Natural killer cell (primary cell): ENCODE measurements at regions of chr3 and their contacts with region 1.

Region 1: GRCh38 chr3:58630076-58630709 is 36.4 kb downstream of the FAM3D start:
- DNase-seq: peak; percentile 40 to 70
- ATAC-seq: peak; percentile 52 to 73 (median 57)
- H3K4me3 ChIP-seq: no peak overlapping the region
- H3K4me3 Mint-ChIP-seq: no peak overlapping the region
- H3K27ac ChIP-seq: no peak overlapping the region
- H3K27ac Mint-ChIP-seq: no peak overlapping the region
- H3K4me1 ChIP-seq: peaks cover 3% of the 10 kb centered on the region
- H3K4me1 Mint-ChIP-seq: peaks cover 5 to 7% of the 10 kb centered on the region in 2 donors
- H3K27me3 ChIP-seq: no peaks in the 10 kb centered on the region
- H3K27me3 Mint-ChIP-seq: peaks cover 8 to 10% of the 10 kb centered on the region in 2 donors
- CTCF ChIP-seq: peak; percentile 85

Region 2: GRCh38 chr3:58299839-58300516 is 330.2 kb before region 1 on chr3:
- intact Hi-C with region 1: loop called (anchors 5 kb)
- DNase-seq: peak in 1 of 2 donors; percentile 36
- ATAC-seq: peak in 1 of 3 donors; percentile 18
- H3K4me3 ChIP-seq: no peak overlapping the region
- H3K4me3 Mint-ChIP-seq: no peak overlapping the region
- H3K27ac ChIP-seq: no peak overlapping the region
- H3K27ac Mint-ChIP-seq: no peak overlapping the region
- H3K4me1 ChIP-seq: no peaks in the 10 kb centered on the region
- H3K4me1 Mint-ChIP-seq: no peaks in the 10 kb centered on the region
- H3K27me3 ChIP-seq: no peaks in the 10 kb centered on the region
- H3K27me3 Mint-ChIP-seq: peaks cover 18 to 19% of the 10 kb centered on the region in 2 donors
- CTCF ChIP-seq: peak; percentile 29

Region 3: GRCh38 chr3:58321791-58322190 is 308.4 kb before region 1 on chr3:
- intact Hi-C with region 1: loop called (anchors 2 kb)
- DNase-seq: no peak
- ATAC-seq: no peak
- H3K4me3 ChIP-seq: no peak overlapping the region
- H3K4me3 Mint-ChIP-seq: no peak overlapping the region
- H3K27ac ChIP-seq: no peak overlapping the region
- H3K27ac Mint-ChIP-seq: no peak overlapping the region
- H3K4me1 ChIP-seq: no peaks in the 10 kb centered on the region
- H3K4me1 Mint-ChIP-seq: no peaks in the 10 kb centered on the region
- H3K27me3 ChIP-seq: no peaks in the 10 kb centered on the region
- H3K27me3 Mint-ChIP-seq: no peaks in the 10 kb centered on the region
- CTCF ChIP-seq: no peak

Region 4: GRCh38 chr3:58497097-58497496 is 133.1 kb before region 1 on chr3:
- intact Hi-C with region 1: no loop called
- DNase-seq: no peak
- ATAC-seq: no peak
- H3K4me3 ChIP-seq: no peak overlapping the region
- H3K4me3 Mint-ChIP-seq: no peak overlapping the region
- H3K27ac ChIP-seq: no peak overlapping the region
- H3K27ac Mint-ChIP-seq: no peak overlapping the region
- H3K4me1 ChIP-seq: peaks cover 8% of the 10 kb centered on the region
- H3K4me1 Mint-ChIP-seq: peaks cover 47 to 53% of the 10 kb centered on the region in 2 donors
- H3K27me3 ChIP-seq: no peaks in the 10 kb centered on the region
- H3K27me3 Mint-ChIP-seq: no peaks in the 10 kb centered on the region
- CTCF ChIP-seq: no peak

Region 5: DNA sequence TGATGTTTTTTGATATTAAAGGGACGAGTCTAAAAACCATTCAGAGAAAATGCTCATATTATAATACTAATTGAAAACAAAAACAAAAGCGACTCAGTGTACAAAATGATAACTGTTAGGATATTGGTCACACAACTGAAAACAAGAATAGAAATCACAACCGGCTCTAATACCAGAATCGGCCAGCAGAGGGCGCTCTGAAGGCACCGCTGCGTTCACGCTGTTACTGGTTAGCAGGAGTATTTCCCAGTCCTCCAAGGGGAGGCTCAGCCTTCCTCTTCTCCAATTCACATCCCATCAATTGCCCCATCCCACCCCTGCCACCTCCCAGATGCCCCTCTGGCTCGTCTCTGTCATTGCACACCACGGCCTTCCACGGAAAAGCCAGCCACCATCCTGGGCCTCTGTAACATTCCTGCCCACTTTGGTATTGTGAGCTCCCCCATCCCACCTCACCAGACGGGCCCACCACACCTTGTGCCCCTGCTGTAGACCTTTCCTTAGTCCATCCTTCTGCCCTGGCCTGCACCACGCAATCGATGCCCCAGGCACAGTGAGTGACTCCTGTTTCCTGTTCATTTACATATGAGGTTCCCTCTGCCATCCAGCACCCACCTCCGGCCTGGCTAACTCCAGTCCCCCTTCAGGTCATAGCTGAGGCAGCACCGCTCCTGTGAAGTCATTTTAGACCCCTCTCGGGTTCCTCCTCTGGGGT is 61.5 kb before region 1 on chr3:
- intact Hi-C with region 1: loop called (anchors 1 kb)
- DNase-seq: peak; percentile 66 to 75
- ATAC-seq: peak; percentile 51 to 81 (median 67)
- H3K4me3 ChIP-seq: no peak overlapping the region
- H3K4me3 Mint-ChIP-seq: peak overlapping the region; percentile 36
- H3K27ac ChIP-seq: no peak overlapping the region
- H3K27ac Mint-ChIP-seq: no peak overlapping the region
- H3K4me1 ChIP-seq: no peaks in the 10 kb centered on the region
- H3K4me1 Mint-ChIP-seq: peaks cover 8% of the 10 kb centered on the region in 2 donors
- H3K27me3 ChIP-seq: no peaks in the 10 kb centered on the region
- H3K27me3 Mint-ChIP-seq: no peaks in the 10 kb centered on the region
- CTCF ChIP-seq: peak; percentile 97

Region 6: DNA sequence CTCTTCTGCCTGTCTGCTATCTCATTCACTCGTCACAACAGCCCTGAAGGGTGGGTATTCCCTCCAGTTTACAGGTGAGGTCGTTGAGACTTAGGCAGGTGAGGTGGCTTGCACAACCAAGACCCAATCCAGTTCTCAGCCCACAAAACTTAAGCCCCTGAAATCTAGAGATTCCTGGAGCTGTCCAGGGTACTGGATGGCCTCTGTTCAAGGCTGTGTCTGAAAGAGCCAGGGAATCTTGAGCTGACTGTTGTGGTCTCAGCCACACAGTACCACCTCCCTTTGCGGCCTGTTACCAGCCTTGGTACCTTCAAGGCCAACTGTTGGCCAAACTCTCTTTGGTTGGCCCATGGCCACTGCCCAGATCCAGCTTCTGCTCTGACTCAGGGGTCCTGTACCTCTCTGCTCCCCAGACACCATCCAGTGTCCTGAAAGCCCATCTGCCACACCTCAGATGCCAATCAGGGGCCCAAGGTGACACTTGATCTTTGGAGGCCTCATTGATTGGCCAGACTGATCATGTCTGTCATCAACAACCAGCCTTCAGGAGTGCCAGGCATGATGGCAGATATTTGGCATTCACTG is 42.1 kb before region 1 on chr3:
- intact Hi-C with region 1: no loop called
- DNase-seq: no peak
- ATAC-seq: no peak
- H3K4me3 ChIP-seq: no peak overlapping the region
- H3K4me3 Mint-ChIP-seq: no peak overlapping the region
- H3K27ac ChIP-seq: no peak overlapping the region
- H3K27ac Mint-ChIP-seq: no peak overlapping the region
- H3K4me1 ChIP-seq: peaks cover 11% of the 10 kb centered on the region
- H3K4me1 Mint-ChIP-seq: peaks cover 22 to 25% of the 10 kb centered on the region in 2 donors
- H3K27me3 ChIP-seq: peaks cover 20% of the 10 kb centered on the region
- H3K27me3 Mint-ChIP-seq: peaks cover 48 to 50% of the 10 kb centered on the region in 2 donors
- CTCF ChIP-seq: no peak